ENCODE measurements at regions of chr21 and their contacts with region 1.

Region 1: DNA sequence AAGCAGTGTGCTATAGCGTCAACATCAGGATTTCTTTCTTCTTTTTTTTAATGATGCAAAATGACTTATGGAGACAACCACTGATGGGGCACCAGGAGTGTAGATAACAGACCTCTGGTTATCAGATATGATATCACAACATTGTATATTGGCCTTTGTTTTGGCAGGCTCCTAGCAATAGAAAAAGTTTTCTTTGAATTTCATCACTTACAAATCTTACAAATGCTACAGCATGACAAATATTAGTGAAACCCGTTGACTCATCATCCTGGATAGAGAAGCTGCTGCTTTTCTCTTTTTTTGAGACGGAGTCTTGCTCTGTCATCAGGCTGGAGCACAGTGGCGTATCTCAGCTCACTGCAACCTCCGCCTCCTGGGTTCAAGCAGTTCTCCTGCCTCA is 92.9 kb downstream of the LTN1 start:
- DNase-seq: no peak
- ATAC-seq: peak; percentile 44

Region 2: GRCh38 chr21:28975397-28975796 is 75.7 kb after region 1 on chr21:
- intact Hi-C with region 1: loop called (anchors 2 kb)
- DNase-seq: no peak
- ATAC-seq: peak; percentile 30